ENCODE measurements at regions of chr18 and their contacts with region 1.

Region 1: GRCh38 chr18:53909668-53910067 is 314.8 kb downstream of the MBD2 start:
- H3K4me3 Mint-ChIP-seq: no peak overlapping the region
- H3K27ac Mint-ChIP-seq: no peak overlapping the region
- H3K4me1 Mint-ChIP-seq: no peaks in the 10 kb centered on the region
- H3K27me3 Mint-ChIP-seq: no peaks in the 10 kb centered on the region

Region 2: GRCh38 chr18:54020156-54020745 is 110.6 kb after region 1 on chr18:
- intact Hi-C with region 1: no loop called
- H3K4me3 Mint-ChIP-seq: no peak overlapping the region
- H3K27ac Mint-ChIP-seq: no peak overlapping the region
- H3K4me1 Mint-ChIP-seq: no peaks in the 10 kb centered on the region
- H3K27me3 Mint-ChIP-seq: no peaks in the 10 kb centered on the region

Region 3: DNA sequence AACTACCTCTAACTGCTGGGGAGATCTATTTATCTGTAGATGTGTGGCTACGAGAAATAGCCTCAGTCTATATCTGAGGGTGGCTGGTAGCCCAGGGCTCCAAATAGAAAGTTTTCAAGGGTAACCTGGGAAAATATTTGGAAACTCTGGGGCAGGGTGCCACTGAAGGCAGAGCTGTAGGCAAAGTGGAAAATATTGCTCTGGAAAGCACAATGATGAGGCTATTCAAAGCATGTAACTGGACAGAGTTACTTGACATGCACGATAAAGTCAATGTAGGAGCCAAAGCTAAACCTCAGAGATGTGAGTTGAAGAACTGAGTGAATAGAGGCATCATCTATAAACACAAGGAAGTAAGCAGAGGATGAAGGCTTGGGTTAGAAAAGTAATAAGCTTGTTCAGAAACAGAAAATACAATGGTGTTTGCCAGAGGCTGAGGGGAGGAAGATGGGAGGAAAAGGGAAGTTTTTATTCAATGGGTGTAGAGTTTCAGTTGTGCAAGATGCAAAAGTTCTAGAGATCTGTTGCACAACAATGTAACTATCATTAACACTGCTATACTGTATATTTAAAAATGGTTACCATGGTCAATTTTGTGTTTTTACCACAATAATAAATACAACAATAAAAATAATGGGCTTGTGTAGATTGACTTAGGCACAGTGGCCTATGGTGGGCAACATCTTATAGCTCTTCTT is 143.2 kb after region 1 on chr18:
- intact Hi-C with region 1: no loop called
- H3K4me3 Mint-ChIP-seq: no peak overlapping the region
- H3K27ac Mint-ChIP-seq: no peak overlapping the region
- H3K4me1 Mint-ChIP-seq: no peaks in the 10 kb centered on the region
- H3K27me3 Mint-ChIP-seq: peaks cover 1% of the 10 kb centered on the region

Region 4: DNA sequence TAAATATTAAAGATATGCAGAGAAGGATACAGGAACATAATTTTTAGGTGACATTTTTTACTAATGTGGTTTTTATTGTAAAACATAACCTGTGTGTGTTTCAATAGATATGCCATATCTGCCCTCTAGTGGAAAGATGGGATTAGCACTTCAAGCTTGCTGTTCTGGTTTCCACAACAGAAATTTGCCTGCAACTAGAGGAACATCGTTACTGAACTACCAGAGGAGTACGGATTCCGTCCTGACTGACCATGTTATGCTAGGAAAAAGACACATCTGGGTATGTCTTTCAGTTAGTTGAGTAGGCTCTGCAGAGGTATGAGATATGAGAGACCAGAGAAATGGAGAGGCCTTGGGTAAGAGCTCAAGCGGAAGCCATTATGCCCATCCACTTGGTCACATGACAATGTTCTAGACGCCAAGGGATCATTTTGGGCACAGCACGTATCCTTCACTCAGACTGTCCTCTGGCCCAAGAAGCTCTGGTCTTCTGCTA is 209.9 kb after region 1 on chr18:
- intact Hi-C with region 1: loop called (anchors 10 kb)
- H3K4me3 Mint-ChIP-seq: peak overlapping the region; percentile 28
- H3K27ac Mint-ChIP-seq: no peak overlapping the region
- H3K4me1 Mint-ChIP-seq: peaks cover 5% of the 10 kb centered on the region
- H3K27me3 Mint-ChIP-seq: peaks cover 1% of the 10 kb centered on the region